ENCODE measurements at regions of chr1 and their contacts with region 1.

Region 1: GRCh38 chr1:55584526-55585401 is 369.6 kb upstream of the USP24 start:
- DNase-seq: peak in 1 of 2 donors; percentile 87
- H3K4me3 ChIP-seq: no peak overlapping the region
- H3K27ac ChIP-seq: peak overlapping the region; percentile 91
- H3K4me1 ChIP-seq: peaks cover 80% of the 10 kb centered on the region
- H3K27me3 ChIP-seq: no peaks in the 10 kb centered on the region
- CTCF ChIP-seq: no peak
- POLR2A ChIP-seq: no peak

Region 2: GRCh38 chr1:54542120-54542961 is 1042.4 kb before region 1 on chr1:
- intact Hi-C with region 1: no loop called
- DNase-seq: no peak
- H3K4me3 ChIP-seq: peak overlapping the region; percentile 41 to 50
- H3K27ac ChIP-seq: peak overlapping the region; percentile 86
- H3K4me1 ChIP-seq: peaks cover 23% of the 10 kb centered on the region
- H3K27me3 ChIP-seq: no peaks in the 10 kb centered on the region
- CTCF ChIP-seq: no peak
- POLR2A ChIP-seq: no peak

Region 3: GRCh38 chr1:55463814-55464475 is 120.8 kb before region 1 on chr1:
- intact Hi-C with region 1: loop called (anchors 2 kb)
- DNase-seq: no peak
- H3K4me3 ChIP-seq: no peak overlapping the region
- H3K27ac ChIP-seq: peak overlapping the region; percentile 91
- H3K4me1 ChIP-seq: peaks cover 45% of the 10 kb centered on the region
- H3K27me3 ChIP-seq: no peaks in the 10 kb centered on the region
- CTCF ChIP-seq: no peak
- POLR2A ChIP-seq: no peak

Region 4: DNA sequence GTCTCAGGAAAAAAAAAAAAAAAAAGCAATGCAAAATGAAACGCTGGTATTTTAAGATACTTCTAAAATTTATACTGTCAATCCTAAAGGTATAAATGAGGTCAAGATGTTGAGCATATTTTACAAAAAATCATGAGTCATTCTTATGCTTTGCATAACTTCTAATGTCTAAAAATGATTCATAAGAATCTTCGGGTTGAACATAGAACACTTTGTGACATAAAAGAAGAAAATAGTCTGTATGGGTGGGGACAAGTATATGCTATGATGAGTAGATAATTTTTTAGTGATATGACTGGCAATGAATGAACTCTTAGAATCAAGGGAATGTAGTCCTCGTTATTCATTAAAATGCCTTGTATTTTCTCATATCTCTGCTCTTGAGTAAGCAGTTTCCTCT is 47.3 kb after region 1 on chr1:
- intact Hi-C with region 1: loop called (anchors 10 kb)
- DNase-seq: no peak
- H3K4me3 ChIP-seq: no peak overlapping the region
- H3K27ac ChIP-seq: peak overlapping the region; percentile 30
- H3K4me1 ChIP-seq: peaks cover 24% of the 10 kb centered on the region
- H3K27me3 ChIP-seq: no peaks in the 10 kb centered on the region
- CTCF ChIP-seq: no peak
- POLR2A ChIP-seq: no peak